ENCODE measurements at regions of chr15 and their contacts with region 1.

Region 1: DNA sequence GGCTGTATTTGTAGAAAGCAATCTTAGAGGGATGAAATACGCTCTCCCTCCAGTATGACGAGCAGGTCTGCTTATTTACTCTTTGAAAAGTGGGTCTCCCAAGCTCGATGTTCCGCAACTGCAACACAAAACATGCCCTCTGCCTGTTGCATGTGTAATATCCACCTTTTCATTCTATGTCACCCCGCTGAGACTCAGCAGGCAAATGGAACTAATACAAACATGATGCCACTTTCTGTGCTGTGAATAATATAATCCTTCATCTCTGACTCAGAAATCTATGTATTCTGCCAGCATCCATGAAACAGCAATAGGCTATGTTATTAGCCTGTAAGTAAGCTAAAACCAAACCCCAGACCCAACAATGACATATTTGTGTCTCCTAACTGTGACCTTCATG is 200.8 kb upstream of the TMCO5A start:
- DNase-seq: no peak
- ATAC-seq: no peak
- H3K4me3 ChIP-seq: no peak overlapping the region
- H3K4me3 Mint-ChIP-seq: no peak overlapping the region
- H3K27ac ChIP-seq: no peak overlapping the region
- H3K27ac Mint-ChIP-seq: no peak overlapping the region
- H3K4me1 ChIP-seq: no peaks in the 10 kb centered on the region
- H3K4me1 Mint-ChIP-seq: no peaks in the 10 kb centered on the region
- H3K27me3 ChIP-seq: no peaks in the 10 kb centered on the region
- H3K27me3 Mint-ChIP-seq: no peaks in the 10 kb centered on the region
- CTCF ChIP-seq: no peak

Region 2: GRCh38 chr15:37625576-37625975 is 108.1 kb before region 1 on chr15:
- CTCF ChIA-PET with region 1: no interaction called
- POLR2A ChIA-PET with region 1: no interaction called
- intact Hi-C with region 1: loop called in 1 of 2 experiments (anchors 5 kb)
- DNase-seq: no peak
- ATAC-seq: no peak
- H3K4me3 ChIP-seq: no peak overlapping the region
- H3K4me3 Mint-ChIP-seq: no peak overlapping the region
- H3K27ac ChIP-seq: no peak overlapping the region
- H3K27ac Mint-ChIP-seq: no peak overlapping the region
- H3K4me1 ChIP-seq: no peaks in the 10 kb centered on the region
- H3K4me1 Mint-ChIP-seq: no peaks in the 10 kb centered on the region
- H3K27me3 ChIP-seq: no peaks in the 10 kb centered on the region
- H3K27me3 Mint-ChIP-seq: no peaks in the 10 kb centered on the region
- CTCF ChIP-seq: no peak

Measured in CD8-positive, alpha-beta T cell (primary cell).